Aorta (tissue), 5 donors: ENCODE measurements at regions of chr1 and their contacts with region 1.

Region 1: DNA sequence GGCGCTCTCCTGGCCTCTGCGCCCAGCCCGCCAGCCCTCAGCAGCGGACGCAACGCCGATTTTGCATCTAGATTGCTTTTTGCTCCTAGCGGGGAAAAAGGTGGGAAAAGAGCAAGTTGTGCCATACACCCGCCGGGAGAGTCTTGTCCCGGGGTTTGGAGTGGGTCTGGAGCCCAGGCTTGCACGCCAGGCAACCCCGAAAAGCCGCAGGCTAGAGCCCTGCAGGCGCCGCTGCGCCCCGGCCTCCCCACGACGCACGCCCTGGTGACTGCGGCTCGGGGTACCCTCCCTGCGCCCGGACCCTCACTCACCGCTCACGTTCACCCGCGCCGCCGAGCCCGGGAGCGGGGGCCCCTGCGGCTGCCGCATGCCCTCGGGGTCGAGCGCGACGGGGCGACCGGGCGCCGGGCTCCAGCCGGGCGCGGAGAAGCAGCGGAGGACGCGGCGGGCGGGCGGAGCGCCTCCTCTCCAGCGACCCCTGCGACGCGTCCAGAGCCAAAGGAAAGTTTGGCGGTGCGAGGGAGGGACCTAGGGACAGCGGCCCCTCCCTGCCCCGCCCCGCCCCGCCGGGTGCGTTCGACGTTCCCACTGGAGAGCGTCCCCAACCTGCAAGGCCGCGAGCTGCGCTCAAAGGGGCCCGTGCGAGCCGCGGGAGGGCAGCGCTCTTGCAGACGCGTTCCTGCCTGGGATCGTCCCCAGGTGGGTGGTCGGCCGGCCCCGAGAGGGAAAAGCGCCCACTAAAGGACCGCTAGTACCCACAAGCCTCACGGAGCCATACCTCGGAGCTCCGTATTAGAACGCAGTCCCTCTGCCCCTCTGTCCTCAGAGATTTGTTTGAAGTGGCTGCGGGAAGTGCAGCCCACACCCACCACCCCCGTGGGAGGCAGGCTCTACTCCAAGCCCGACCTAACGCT is at the start of gene LPAR3:
- DNase-seq: no peak
- ATAC-seq: no peak
- H3K4me3 ChIP-seq: no peak within 1 kb of the TSS
- H3K27ac ChIP-seq: no peak within 1 kb of the TSS
- H3K4me1 ChIP-seq: no peaks in the 10 kb centered on the region
- H3K27me3 ChIP-seq: no peaks in the 10 kb centered on the region
- total RNA-seq, gene LPAR3: 0.10 to 0.33 TPM

Region 2: GRCh38 chr1:84795966-84796600 is 96.9 kb before region 1 on chr1:
- intact Hi-C with region 1: loop called in 1 of 2 experiments (anchors 10 kb)
- DNase-seq: no peak
- ATAC-seq: no peak
- H3K4me3 ChIP-seq: no peak overlapping the region
- H3K27ac ChIP-seq: no peak overlapping the region
- H3K4me1 ChIP-seq: no peaks in the 10 kb centered on the region
- H3K27me3 ChIP-seq: no peaks in the 10 kb centered on the region

Region 3: GRCh38 chr1:84823511-84823910 is 69.5 kb before region 1 on chr1:
- intact Hi-C with region 1: no loop called
- DNase-seq: no peak
- ATAC-seq: no peak
- H3K4me3 ChIP-seq: no peak overlapping the region
- H3K27ac ChIP-seq: no peak overlapping the region
- H3K4me1 ChIP-seq: no peaks in the 10 kb centered on the region
- H3K27me3 ChIP-seq: no peaks in the 10 kb centered on the region